ENCODE measurements at regions of chr17 and their contacts with region 1.

Region 1: DNA sequence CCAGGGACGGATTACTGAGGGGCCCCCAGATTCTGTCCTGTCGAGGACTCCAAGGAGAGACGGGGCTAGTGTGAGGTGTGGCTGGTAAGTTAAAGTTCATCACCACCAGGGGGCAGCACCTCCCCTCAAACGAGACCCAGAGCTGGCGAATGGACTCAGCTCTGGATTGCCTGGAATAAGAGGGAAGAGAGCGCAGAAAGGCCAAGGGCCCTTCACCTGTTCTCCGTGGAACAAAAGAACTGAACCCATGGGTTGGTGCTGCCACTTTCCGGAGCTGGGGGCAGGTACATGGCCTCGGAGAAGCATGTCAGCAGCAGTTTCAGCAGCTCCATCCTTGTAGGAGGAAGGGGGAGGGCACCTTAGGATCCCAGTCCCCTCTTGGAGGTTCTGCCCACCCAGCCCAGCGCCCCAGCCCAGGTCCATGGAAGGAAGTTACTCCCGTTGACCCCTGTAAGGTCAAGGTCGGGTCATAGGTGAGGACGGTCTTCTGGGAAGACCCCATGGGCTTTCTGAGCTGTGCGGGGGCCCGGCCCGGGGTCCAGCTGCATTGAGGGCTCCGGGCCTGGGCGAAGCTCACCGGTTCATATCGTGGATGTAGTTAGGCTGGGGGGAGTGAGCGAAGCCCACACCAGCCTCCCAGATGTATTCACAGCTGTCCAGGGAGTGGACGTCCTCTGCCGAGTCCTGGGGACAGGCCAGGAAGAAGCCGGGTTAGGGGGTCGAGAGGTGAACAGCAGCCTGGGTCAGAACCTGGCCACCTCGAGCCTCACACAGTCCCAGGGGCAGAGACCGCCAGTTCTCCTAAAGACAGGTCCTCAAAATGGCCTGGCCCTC is 10.7 kb downstream of the HID1 start:
- DNase-seq: peak; percentile 83
- H3K4me3 ChIP-seq: no peak overlapping the region
- H3K27ac ChIP-seq: no peak overlapping the region
- H3K4me1 ChIP-seq: no peaks in the 10 kb centered on the region
- H3K27me3 ChIP-seq: no peaks in the 10 kb centered on the region
- CTCF ChIP-seq: peak; percentile 62 to 74
- POLR2A ChIP-seq: no peak

Region 2: DNA sequence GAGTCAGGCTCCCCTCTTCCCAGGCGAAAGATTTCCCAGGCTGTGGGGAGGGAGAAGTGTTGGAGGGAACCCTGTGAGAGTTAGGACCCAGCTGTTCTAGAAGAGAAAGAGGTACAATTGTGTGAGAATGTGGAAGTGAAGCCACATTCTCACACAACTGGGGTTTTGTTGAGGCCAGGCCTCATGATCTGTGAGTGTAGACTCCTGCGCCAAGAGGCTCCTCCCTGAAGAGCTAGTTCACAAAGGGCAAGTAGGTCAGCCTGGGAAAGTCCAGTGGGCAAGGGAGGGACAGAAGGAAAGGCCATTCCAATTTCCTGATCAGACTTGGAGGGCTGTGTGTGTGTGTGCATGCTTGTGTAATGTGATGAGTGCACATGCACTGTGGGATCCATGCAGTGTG is 264.4 kb before region 1 on chr17:
- CTCF ChIA-PET with region 1: no interaction called
- POLR2A ChIA-PET with region 1: no interaction called
- dilution Hi-C with region 1: no loop called
- intact Hi-C with region 1: no loop called
- DNase-seq: no peak
- H3K4me3 ChIP-seq: no peak overlapping the region
- H3K27ac ChIP-seq: no peak overlapping the region
- H3K4me1 ChIP-seq: no peaks in the 10 kb centered on the region
- H3K27me3 ChIP-seq: no peaks in the 10 kb centered on the region
- CTCF ChIP-seq: no peak
- POLR2A ChIP-seq: no peak

Region 3: GRCh38 chr17:74842599-74843351 is 119.1 kb before region 1 on chr17:
- CTCF ChIA-PET with region 1: interaction called, 14 read pairs
- POLR2A ChIA-PET with region 1: interaction called, 3 read pairs
- dilution Hi-C with region 1: no loop called
- intact Hi-C with region 1: no loop called
- DNase-seq: peak; percentile 82
- H3K4me3 ChIP-seq: peak overlapping the region in 1 of 3 experiments; percentile 43
- H3K27ac ChIP-seq: no peak overlapping the region
- H3K4me1 ChIP-seq: no peaks in the 10 kb centered on the region
- H3K27me3 ChIP-seq: no peaks in the 10 kb centered on the region
- CTCF ChIP-seq: peak; percentile 50 to 64
- POLR2A ChIP-seq: no peak

Region 4: GRCh38 chr17:74981979-74982662 is 20.2 kb after region 1 on chr17:
- CTCF ChIA-PET with region 1: interaction called, 21 read pairs
- POLR2A ChIA-PET with region 1: no interaction called
- dilution Hi-C with region 1: no loop called
- intact Hi-C with region 1: no loop called
- DNase-seq: peak; percentile 47
- H3K4me3 ChIP-seq: peak overlapping the region; percentile 12 to 38 (median 25)
- H3K27ac ChIP-seq: peak overlapping the region; percentile 1
- H3K4me1 ChIP-seq: peaks cover 11% of the 10 kb centered on the region
- H3K27me3 ChIP-seq: peaks cover 0 to 2% of the 10 kb centered on the region in 2 experiments
- CTCF ChIP-seq: no peak
- POLR2A ChIP-seq: peak; percentile 66

Region 5: DNA sequence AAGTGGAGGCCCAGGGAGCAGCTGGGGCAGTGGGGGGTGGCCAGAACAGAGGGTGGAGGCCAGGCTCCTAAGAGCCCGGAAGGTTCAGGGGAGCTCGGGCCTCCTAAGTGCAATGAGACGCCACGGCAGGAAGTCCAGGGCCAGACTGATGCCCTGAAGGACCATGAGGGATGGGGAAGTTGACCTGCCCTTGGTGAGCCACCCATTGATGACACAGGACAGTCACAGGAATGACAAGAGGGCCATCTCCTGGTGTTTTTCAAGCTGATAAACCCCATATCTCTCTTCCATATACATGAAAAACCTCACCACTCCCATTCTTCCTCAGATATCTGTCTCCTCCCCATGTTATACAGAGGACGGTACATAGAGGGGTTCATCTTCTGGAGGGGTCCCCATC is 44.8 kb after region 1 on chr17:
- CTCF ChIA-PET with region 1: interaction called, 134 read pairs
- POLR2A ChIA-PET with region 1: interaction called, 10 read pairs
- dilution Hi-C with region 1: no loop called
- intact Hi-C with region 1: no loop called
- DNase-seq: no peak
- H3K4me3 ChIP-seq: no peak overlapping the region
- H3K27ac ChIP-seq: no peak overlapping the region
- H3K4me1 ChIP-seq: peaks cover 2% of the 10 kb centered on the region
- H3K27me3 ChIP-seq: no peaks in the 10 kb centered on the region
- CTCF ChIP-seq: no peak
- POLR2A ChIP-seq: no peak

Region 6: DNA sequence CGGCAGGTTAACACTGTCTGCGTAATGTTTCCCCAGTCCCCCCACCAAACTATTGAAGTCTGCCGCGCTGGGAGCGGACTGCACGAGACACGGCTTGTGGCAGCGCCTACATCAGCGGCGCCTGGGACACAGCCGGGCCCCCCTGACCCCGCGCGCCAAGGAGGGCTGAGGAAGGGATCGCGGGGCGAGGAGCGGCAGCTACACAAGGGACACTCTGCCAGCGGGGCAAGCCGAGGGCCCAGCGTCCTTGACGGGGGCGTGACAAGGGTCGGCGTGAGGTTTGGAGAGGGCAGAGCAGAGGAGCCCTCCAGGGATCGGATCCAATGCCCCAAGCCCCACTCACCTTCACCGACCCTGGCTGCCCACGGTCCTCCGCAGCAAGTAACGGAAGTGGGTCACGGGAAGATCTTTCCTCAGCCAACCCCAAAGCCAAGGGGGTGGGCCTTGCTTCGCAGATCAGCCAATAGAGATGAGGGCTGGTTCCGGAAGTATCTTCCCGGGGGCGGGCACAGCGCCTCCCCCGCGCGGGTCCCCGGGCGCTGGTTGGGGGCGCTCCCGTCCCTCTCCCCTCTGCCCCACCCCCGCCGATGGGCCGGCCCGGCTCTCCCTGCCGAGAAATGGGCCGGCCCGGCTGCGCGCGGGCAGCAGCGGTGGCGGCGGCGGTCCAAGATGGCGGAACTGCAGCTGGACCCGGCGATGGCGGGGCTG is 84.9 kb after region 1 on chr17 and contains the starts of genes ATP5PD and KCTD2:
- CTCF ChIA-PET with region 1: interaction called, 13 read pairs
- POLR2A ChIA-PET with region 1: no interaction called
- dilution Hi-C with region 1: no loop called
- intact Hi-C with region 1: loop called (anchors 1 kb)
- DNase-seq: peak; percentile 98
- H3K4me3 ChIP-seq: peak within 1 kb of the TSS; percentile 58 to 93 (median 67)
- H3K27ac ChIP-seq: peak within 1 kb of the TSS; percentile 19
- H3K4me1 ChIP-seq: peaks cover 13% of the 10 kb centered on the region
- H3K27me3 ChIP-seq: no peaks in the 10 kb centered on the region
- CTCF ChIP-seq: no peak
- POLR2A ChIP-seq: peak; percentile 93
- total RNA-seq, gene ATP5PD: 200 and 202 TPM in 2 replicates
- total RNA-seq, gene KCTD2: 20.6 and 23.2 TPM in 2 replicates

Region 7: GRCh38 chr17:75131280-75132017 is 169.6 kb after region 1 on chr17 and contains the start of gene NT5C:
- CTCF ChIA-PET with region 1: interaction called, 10 read pairs
- POLR2A ChIA-PET with region 1: no interaction called
- dilution Hi-C with region 1: no loop called
- intact Hi-C with region 1: loop called (anchors 1 kb)
- DNase-seq: peak; percentile 73
- H3K4me3 ChIP-seq: peak within 1 kb of the TSS; percentile 47 to 53 (median 50)
- H3K27ac ChIP-seq: peak within 1 kb of the TSS; percentile 51
- H3K4me1 ChIP-seq: peaks cover 9% of the 10 kb centered on the region
- H3K27me3 ChIP-seq: no peaks in the 10 kb centered on the region
- CTCF ChIP-seq: peak; percentile 72
- POLR2A ChIP-seq: peak; percentile 83
- total RNA-seq, gene NT5C: 32.6 and 39.2 TPM in 2 replicates

Measured in endothelial cell of umbilical vein (primary cell).